ENCODE measurements at regions of chr10 and their contacts with region 1.

Region 1: DNA sequence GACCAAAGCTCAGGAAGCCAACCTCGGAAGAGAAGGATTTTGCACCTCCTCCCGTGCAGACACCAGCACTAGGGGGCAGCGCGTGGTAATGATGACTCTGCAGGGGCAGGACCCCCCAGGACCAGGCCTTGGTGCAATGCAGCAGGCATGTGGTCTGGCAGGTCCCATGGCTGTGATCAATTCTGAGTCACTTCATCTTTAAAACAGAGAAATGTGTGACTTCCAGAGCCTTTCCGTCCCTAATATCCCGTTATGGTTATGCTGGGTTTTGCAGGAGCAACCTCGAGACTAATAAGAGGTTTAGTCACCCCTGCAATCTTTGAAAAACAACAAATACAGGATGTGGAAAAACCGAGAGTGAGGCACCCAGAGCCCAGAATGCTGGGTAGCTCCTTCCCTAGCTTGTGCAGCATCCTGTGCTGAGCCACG is 30.2 kb upstream of the GJD4 start:
- DNase-seq: no peak
- ATAC-seq: no peak
- H3K4me3 ChIP-seq: no peak overlapping the region
- H3K27ac ChIP-seq: no peak overlapping the region
- H3K4me1 ChIP-seq: peaks cover 0 to 17% (median 11%) of the 10 kb centered on the region in 9 donors
- H3K27me3 ChIP-seq: no peaks in the 10 kb centered on the region
- CTCF ChIP-seq: peak in 1 of 9 donors; percentile 16

Region 2: DNA sequence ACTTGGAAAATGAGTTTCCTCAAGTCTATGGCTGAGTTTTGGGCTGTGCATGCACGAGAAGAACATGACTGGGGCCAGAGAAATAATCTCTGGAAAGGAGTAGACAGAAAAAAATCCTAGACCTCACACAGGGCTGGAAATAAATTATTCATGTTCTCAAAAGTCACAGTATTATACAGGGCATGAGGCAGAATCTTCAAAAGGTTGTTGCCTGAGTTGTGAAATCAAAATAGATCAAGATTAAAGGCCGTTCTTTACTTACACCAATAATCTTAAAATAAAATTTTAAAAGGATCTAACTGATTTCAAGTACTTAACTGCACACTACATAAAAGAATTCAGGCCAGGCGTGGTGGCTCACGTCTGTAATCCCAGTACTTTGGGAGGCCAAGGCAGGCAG is 462.4 kb before region 1 on chr10:
- intact Hi-C with region 1: loop called in 1 of 10 experiments (anchors 10 kb)
- DNase-seq: no peak
- ATAC-seq: no peak
- H3K4me3 ChIP-seq: no peak overlapping the region
- H3K27ac ChIP-seq: no peak overlapping the region
- H3K4me1 ChIP-seq: no peaks in the 10 kb centered on the region
- H3K27me3 ChIP-seq: no peaks in the 10 kb centered on the region
- CTCF ChIP-seq: no peak

Region 3: GRCh38 chr10:36114913-36115312 is 540.0 kb after region 1 on chr10:
- intact Hi-C with region 1: loop called in 1 of 10 experiments (anchors 5 kb)
- DNase-seq: no peak
- ATAC-seq: peak in 6 of 8 donors; percentile 18 to 57 (median 37)
- H3K4me3 ChIP-seq: no peak overlapping the region
- H3K27ac ChIP-seq: peak overlapping the region in 2 of 10 donors; percentile 15 to 29
- H3K4me1 ChIP-seq: peaks cover 0 to 47% (median 24%) of the 10 kb centered on the region in 9 donors
- H3K27me3 ChIP-seq: no peaks in the 10 kb centered on the region
- CTCF ChIP-seq: no peak

Measured in heart right ventricle (tissue), 16 donors.